ENCODE measurements at regions of chr1 and their contacts with region 1.

Region 1: DNA sequence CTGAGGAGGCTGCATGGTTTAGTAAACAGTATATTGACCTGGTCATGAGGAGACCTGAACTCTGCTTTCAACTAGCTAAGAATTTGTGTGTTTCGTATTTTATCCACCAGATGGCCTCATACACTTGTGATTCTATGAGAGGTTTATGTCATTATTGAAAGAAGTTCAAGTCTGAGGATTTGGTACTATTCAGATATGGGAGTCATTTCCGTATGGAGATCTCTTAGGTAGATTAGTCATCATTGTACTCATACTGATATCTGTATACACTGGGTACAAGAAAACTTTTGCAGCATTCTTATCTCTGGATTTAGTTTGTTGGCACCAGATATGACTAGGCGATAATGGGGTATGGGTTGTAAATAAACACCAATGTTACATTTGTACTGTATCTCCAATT is 26.6 kb downstream of the ATF6 start:
- DNase-seq: peak; percentile 15
- H3K4me3 ChIP-seq: no peak overlapping the region
- H3K27ac ChIP-seq: no peak overlapping the region
- H3K4me1 ChIP-seq: no peaks in the 10 kb centered on the region
- H3K27me3 ChIP-seq: no peaks in the 10 kb centered on the region
- CTCF ChIP-seq: peak in 3 of 4 experiments; percentile 63 to 77 (median 76)
- POLR2A ChIP-seq: no peak

Region 2: DNA sequence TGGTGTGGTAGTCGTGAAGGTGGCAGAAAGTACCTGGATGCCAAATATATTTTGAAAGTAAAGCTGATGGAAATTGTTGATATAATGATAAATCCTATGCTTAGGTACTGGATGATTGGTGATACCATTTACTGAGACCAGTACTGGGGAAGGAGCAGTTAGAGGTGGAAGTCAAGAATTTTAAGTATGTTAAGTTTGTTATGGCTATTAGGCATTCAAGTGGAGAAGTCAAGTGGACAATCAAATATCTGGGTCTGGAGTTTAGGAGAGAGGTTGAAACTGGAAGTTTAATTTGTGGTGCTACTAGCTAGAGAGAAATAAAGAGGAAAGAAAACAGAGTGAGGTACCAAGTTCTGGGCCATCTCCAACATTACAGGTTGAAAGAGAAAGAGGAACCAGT is 62.5 kb after region 1 on chr1:
- intact Hi-C with region 1: loop called (anchors 10 kb)
- DNase-seq: no peak
- H3K4me3 ChIP-seq: no peak overlapping the region
- H3K27ac ChIP-seq: no peak overlapping the region
- H3K4me1 ChIP-seq: no peaks in the 10 kb centered on the region
- H3K27me3 ChIP-seq: no peaks in the 10 kb centered on the region
- CTCF ChIP-seq: no peak
- POLR2A ChIP-seq: no peak

Region 3: GRCh38 chr1:162003826-162004208 is 211.1 kb after region 1 on chr1:
- intact Hi-C with region 1: no loop called
- DNase-seq: no peak
- H3K4me3 ChIP-seq: no peak overlapping the region
- H3K27ac ChIP-seq: no peak overlapping the region
- H3K4me1 ChIP-seq: no peaks in the 10 kb centered on the region
- H3K27me3 ChIP-seq: no peaks in the 10 kb centered on the region
- CTCF ChIP-seq: no peak
- POLR2A ChIP-seq: no peak

Region 4: DNA sequence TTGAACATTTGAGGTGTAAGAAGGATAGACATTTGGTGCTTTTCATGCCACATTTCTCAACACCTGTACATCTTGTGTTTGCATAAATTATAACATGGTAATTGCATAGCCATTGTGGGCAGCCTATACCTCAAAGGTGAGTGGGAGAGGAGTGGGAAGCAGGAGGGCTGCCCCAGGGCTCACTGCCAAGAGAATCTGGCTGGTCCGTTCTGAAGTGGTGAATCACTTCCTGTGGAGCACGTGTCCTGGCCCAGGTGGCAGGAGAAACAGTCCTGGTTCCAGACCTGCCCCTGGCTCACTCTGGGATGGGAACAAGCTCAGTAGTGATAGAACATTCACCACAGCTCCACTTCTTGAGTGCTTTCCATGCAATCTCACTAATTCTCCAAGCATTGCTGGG is 242.5 kb after region 1 on chr1:
- intact Hi-C with region 1: loop called (anchors 2 kb)
- DNase-seq: no peak
- H3K4me3 ChIP-seq: no peak overlapping the region
- H3K27ac ChIP-seq: no peak overlapping the region
- H3K4me1 ChIP-seq: no peaks in the 10 kb centered on the region
- H3K27me3 ChIP-seq: no peaks in the 10 kb centered on the region
- CTCF ChIP-seq: no peak
- POLR2A ChIP-seq: no peak

Measured in prostate gland (tissue), 2 donors.